ENCODE measurements at regions of chr5 and their contacts with region 1.

Region 1: GRCh38 chr5:79990598-79991507 is at the start of gene MTX3:
- DNase-seq: peak; percentile 81
- H3K4me3 Mint-ChIP-seq: peak within 1 kb of the TSS; percentile 88
- H3K27ac Mint-ChIP-seq: peak within 1 kb of the TSS; percentile 98
- H3K4me1 Mint-ChIP-seq: peaks cover 49% of the 10 kb centered on the region
- H3K27me3 Mint-ChIP-seq: no peaks in the 10 kb centered on the region
- total RNA-seq, gene MTX3: 18.0 and 18.2 TPM in 2 replicates

Region 2: DNA sequence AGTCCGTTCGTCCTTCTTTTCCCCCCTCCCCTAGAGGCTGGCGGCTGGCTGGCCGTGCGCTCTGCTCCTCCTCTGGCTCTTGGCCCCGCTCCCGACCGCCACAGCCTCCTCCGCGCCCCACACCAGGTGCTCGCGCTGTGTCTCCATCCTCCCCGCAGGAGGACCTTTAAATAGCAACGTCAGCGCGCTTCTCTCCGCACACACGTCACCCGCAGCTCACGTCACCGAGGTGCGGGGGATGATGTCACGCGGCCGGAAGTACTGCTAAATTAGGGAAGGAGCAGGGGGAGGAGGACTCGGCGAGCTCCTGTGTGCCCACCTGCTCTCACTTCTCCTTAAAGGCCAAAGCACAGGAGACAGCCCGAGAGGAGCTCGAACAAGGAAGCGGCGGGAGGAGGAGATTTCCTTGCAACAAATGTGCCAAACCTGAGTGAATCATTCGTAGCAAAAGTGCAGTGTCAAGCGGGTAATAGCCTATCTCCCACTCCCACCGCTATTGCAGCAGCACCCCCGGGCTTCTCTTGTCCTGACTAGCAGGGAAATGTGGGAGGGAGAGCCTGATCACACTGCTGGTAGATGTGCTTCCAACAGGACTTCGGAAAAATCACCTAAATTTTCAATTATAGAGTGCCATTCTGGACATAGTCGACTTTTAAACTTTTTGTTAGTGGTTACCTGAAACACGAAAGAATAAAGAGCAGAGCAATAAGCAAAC is 476.3 kb before region 1 on chr5:
- intact Hi-C with region 1: loop called (anchors 5 kb)
- DNase-seq: peak; percentile 87
- H3K4me3 Mint-ChIP-seq: peak overlapping the region; percentile 93
- H3K27ac Mint-ChIP-seq: peak overlapping the region; percentile 96
- H3K4me1 Mint-ChIP-seq: peaks cover 35% of the 10 kb centered on the region
- H3K27me3 Mint-ChIP-seq: peaks cover 3% of the 10 kb centered on the region

Region 3: DNA sequence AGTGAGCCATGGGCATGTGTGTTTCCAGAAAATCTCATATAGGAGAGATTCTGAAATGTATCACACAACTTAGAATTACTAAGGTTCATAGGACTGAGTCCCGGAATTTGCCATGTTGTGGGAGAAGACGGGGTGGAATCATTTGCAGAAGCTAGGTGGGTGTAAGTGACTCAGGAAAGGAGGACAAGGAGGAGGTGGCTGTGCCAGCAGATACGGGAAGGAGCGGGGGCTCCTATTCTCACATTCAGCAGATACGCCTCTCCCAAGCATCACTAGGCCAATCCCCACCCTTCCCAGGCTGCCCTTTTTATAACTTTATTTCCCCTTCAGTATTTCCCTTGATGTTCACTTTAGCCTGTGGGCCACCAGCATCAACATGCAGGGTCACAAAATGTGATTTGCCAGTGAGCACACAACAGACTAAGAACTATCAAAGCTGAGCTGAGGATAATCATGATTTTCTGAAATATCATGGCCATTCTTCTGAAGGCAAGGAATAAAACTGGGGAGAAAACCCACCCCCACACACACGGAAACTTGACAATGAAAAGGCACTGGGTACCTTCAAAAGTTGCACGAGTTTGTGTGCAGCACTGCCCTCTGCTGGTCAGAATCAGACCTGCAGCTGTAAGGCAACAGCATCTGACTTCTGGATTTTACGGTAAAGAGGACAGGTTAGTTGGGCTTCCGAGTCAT is 133.0 kb before region 1 on chr5:
- intact Hi-C with region 1: loop called (anchors 5 kb)
- DNase-seq: peak; percentile 58
- H3K4me3 Mint-ChIP-seq: no peak overlapping the region
- H3K27ac Mint-ChIP-seq: no peak overlapping the region
- H3K4me1 Mint-ChIP-seq: peaks cover 3% of the 10 kb centered on the region
- H3K27me3 Mint-ChIP-seq: peaks cover 21% of the 10 kb centered on the region

Region 4: GRCh38 chr5:79962575-79963222 is 28.2 kb before region 1 on chr5:
- intact Hi-C with region 1: loop called (anchors 1 kb)
- DNase-seq: no peak
- H3K4me3 Mint-ChIP-seq: no peak overlapping the region
- H3K27ac Mint-ChIP-seq: peak overlapping the region; percentile 84
- H3K4me1 Mint-ChIP-seq: peaks cover 28% of the 10 kb centered on the region
- H3K27me3 Mint-ChIP-seq: no peaks in the 10 kb centered on the region

Region 5: GRCh38 chr5:79974891-79975290 is 16.0 kb before region 1 on chr5:
- intact Hi-C with region 1: no loop called
- DNase-seq: no peak
- H3K4me3 Mint-ChIP-seq: no peak overlapping the region
- H3K27ac Mint-ChIP-seq: no peak overlapping the region
- H3K4me1 Mint-ChIP-seq: peaks cover 5% of the 10 kb centered on the region
- H3K27me3 Mint-ChIP-seq: peaks cover 2% of the 10 kb centered on the region

Region 6: DNA sequence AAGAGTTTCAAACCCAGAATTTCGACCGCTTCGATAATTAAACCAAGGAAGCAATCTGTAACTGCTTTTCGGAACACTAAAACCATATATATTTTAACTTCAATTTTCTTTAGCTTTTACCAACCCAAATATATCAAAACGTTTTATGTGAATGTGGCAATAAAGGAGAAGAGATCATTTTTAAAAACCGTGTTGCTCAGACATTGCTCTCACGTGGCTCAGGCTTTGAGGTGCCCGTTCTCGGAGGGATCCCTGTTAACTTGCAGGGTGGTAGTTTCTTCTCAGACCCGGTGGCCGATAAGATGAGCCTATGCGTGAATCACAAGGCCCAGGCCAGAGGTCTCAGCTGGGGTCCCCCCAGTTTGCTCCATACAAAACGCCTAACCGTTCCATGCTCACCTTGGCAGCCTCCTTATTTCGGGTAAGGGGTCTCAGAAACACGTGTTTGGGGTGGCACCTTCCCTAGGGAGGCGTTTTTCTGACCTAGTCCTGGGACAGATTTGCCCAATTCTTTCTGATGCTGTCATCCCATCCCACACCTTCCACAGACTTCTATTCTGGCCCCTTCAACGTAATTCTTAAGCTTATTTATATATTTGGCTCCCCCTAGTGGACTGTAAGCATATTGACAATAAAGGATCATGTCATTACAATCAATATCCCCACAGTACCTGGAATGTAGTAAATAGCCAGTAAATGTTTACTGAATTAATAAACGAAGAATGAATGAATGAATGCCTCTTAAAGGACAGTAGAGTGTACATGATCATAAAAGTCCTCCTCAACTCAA is 92.4 kb after region 1 on chr5:
- intact Hi-C with region 1: loop called (anchors 2 kb)
- DNase-seq: peak; percentile 18
- H3K4me3 Mint-ChIP-seq: peak overlapping the region; percentile 72
- H3K27ac Mint-ChIP-seq: peak overlapping the region; percentile 74
- H3K4me1 Mint-ChIP-seq: peaks cover 7% of the 10 kb centered on the region
- H3K27me3 Mint-ChIP-seq: peaks cover 4% of the 10 kb centered on the region

Region 7: GRCh38 chr5:80255732-80256479 is 265.1 kb after region 1 on chr5 and contains the start of gene SERINC5:
- intact Hi-C with region 1: loop called (anchors 5 kb)
- DNase-seq: peak; percentile 83
- H3K4me3 Mint-ChIP-seq: peak within 1 kb of the TSS; percentile 95
- H3K27ac Mint-ChIP-seq: peak within 1 kb of the TSS; percentile 99
- H3K4me1 Mint-ChIP-seq: peaks cover 42% of the 10 kb centered on the region
- H3K27me3 Mint-ChIP-seq: no peaks in the 10 kb centered on the region
- total RNA-seq, gene SERINC5: 18.9 and 19.0 TPM in 2 replicates

Measured in activated T-helper 2 cell treated with anti-CD3 and anti-CD28 coated beads, Interferon-gamma antibody, Interleukin-2, Interleukin-4, amounts not matched to agents 10 μg/mL and 5 μg/mL and 100 μg/mL, durations not matched to agents 14 hours and 24 hours and 36 hours (primary cell).